ENCODE measurements at regions of chr5 and their contacts with region 1.

Region 1: DNA sequence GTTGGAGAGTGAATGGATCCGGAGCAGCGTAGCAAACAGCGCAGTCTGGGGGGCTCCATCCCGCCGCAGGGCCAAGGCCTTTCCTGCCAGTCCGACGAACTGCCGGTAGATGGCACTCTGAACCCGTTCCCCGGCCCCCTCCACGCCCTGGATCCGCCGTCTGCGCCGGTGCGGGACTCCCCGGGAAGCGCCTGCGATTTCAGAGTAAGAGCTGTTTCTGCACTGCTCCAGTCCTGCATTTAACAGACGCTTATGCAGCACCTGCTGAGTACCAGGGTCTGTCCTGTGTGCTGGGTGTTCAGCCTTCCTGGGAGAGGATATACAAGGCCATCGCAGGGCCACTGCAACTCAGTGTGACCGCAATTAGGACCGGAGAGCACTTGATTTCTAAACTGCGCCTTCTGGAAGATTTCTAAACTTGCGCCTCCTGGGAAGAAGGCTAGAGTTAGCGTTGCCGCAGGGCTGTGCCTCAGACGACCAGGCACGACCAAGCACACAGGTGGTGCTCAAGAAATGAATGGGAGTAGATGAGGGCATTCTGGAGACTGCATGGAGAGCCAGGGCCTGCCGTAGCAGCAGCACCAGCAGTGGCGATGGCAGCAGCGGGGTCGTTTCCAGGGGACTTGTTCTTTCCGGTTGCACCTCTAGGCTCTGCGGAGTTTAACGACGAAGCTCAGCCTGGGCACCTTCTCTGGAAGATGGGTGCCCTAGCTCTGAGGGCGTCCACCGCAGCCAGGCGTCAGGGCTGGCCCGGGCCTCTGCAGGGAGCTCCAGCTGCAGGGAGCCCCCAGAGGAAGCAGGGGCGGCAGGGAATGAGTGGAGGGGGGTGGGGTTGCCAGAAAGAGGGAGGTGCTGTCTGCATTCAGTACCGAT is 14.3 kb upstream of the TIFAB start:
- DNase-seq: peak; percentile 81 to 89 (median 84)
- ATAC-seq: peak; percentile 94
- H3K4me3 ChIP-seq: no peak overlapping the region
- H3K27ac ChIP-seq: no peak overlapping the region
- H3K4me1 ChIP-seq: peaks cover 4 to 15% of the 10 kb centered on the region in 2 experiments; a peak in 4 of 5 replicates
- H3K27me3 ChIP-seq: peaks cover 0 to 12% of the 10 kb centered on the region in 2 experiments; a peak in 2 of 5 replicates
- CTCF ChIP-seq: peak; percentile 90 to 95 (median 95)
- EP300 ChIP-seq: no peak
- POLR2A ChIP-seq: no peak
- RAD21 ChIP-seq: peak; percentile 99

Region 2: GRCh38 chr5:135551593-135552447 is 85.4 kb after region 1 on chr5:
- CTCF ChIA-PET with region 1: interaction called, 51 read pairs
- POLR2A ChIA-PET with region 1: interaction called, 28 read pairs
- in situ Hi-C with region 1: loop called (anchors 5 kb)
- intact Hi-C with region 1: loop called (anchors 1 kb)
- DNase-seq: peak; percentile 77 to 80 (median 80)
- ATAC-seq: peak; percentile 93
- H3K4me3 ChIP-seq: no peak overlapping the region
- H3K27ac ChIP-seq: no peak overlapping the region
- H3K4me1 ChIP-seq: peaks cover 3% of the 10 kb centered on the region in 2 experiments; a peak in 2 of 5 replicates
- H3K27me3 ChIP-seq: peaks cover 0 to 16% of the 10 kb centered on the region in 2 experiments; a peak in 3 of 5 replicates
- CTCF ChIP-seq: peak; percentile 90 to 93 (median 93)
- EP300 ChIP-seq: no peak
- POLR2A ChIP-seq: no peak
- RAD21 ChIP-seq: peak; percentile 96 to 98

Region 3: GRCh38 chr5:135565725-135566421 is 99.5 kb after region 1 on chr5:
- CTCF ChIA-PET with region 1: interaction called, 12 read pairs
- POLR2A ChIA-PET with region 1: interaction called, 9 read pairs
- in situ Hi-C with region 1: no loop called
- intact Hi-C with region 1: no loop called
- DNase-seq: peak; percentile 78 to 82 (median 80)
- ATAC-seq: peak; percentile 92
- H3K4me3 ChIP-seq: no peak overlapping the region
- H3K27ac ChIP-seq: no peak overlapping the region
- H3K4me1 ChIP-seq: peaks cover 7 to 10% of the 10 kb centered on the region in 2 experiments
- H3K27me3 ChIP-seq: peaks cover 0 to 4% of the 10 kb centered on the region in 2 experiments; a peak in 2 of 5 replicates
- CTCF ChIP-seq: peak; percentile 91 to 95 (median 92)
- EP300 ChIP-seq: no peak
- POLR2A ChIP-seq: no peak
- RAD21 ChIP-seq: peak; percentile 53 to 66

Region 4: DNA sequence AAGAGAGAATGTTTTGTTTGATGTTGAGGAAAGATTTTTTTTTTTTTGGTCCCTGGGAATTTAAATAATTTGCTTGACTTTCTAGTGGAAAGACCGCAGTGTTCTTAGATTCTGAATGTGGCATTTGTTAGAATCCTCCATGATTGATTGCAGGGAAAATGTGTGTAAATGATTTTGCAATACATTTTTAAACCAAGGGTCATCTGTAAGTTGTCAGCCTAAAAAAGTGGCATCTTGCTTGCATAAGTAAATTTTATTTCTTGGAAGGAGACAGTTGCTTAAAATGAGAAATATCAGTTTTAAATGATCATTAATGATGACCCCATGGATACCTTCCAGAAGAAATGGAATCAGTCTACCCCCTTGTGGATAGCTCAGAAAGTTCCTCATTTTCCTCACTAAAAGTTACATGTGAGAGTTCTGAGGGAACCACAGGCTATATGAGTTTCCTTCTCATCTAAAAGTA is 262.9 kb after region 1 on chr5:
- CTCF ChIA-PET with region 1: no interaction called
- POLR2A ChIA-PET with region 1: no interaction called
- in situ Hi-C with region 1: loop called (anchors 10 kb)
- intact Hi-C with region 1: no loop called
- DNase-seq: no peak
- ATAC-seq: no peak
- H3K4me3 ChIP-seq: no peak overlapping the region
- H3K27ac ChIP-seq: no peak overlapping the region
- H3K4me1 ChIP-seq: no peaks in the 10 kb centered on the region
- H3K27me3 ChIP-seq: peaks cover 0 to 4% of the 10 kb centered on the region in 2 experiments; a peak in 1 of 5 replicates
- CTCF ChIP-seq: peak in 2 of 3 experiments; percentile 15 to 48; a peak in 2 of 6 replicates
- EP300 ChIP-seq: no peak
- POLR2A ChIP-seq: no peak
- RAD21 ChIP-seq: peak in 1 of 2 experiments; percentile 64; a peak in 2 of 4 replicates

Region 5: DNA sequence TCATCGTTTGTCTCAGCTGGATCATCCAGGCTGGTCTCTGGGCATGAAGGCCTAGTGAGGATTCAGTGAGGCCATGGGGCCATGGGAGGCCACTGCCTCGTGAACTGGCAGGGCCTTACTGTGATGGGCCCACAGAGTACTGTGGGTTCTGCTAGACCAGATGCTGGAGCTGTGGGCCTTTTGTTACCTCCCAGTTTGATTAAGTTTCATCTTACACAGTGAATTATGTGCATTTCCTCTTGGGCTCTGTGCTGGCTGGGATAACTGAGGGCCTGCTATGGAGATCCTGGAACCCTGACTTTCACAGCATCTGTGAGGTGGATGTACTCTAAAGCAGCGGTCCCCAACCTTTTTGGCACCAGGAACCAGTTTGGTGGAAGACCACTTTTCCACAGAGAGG is 348.4 kb after region 1 on chr5:
- CTCF ChIA-PET with region 1: no interaction called
- POLR2A ChIA-PET with region 1: no interaction called
- in situ Hi-C with region 1: loop called (anchors 5 kb)
- intact Hi-C with region 1: no loop called
- DNase-seq: no peak
- ATAC-seq: no peak
- H3K4me3 ChIP-seq: no peak overlapping the region
- H3K27ac ChIP-seq: no peak overlapping the region
- H3K4me1 ChIP-seq: no peaks in the 10 kb centered on the region
- H3K27me3 ChIP-seq: peaks cover 4 to 24% of the 10 kb centered on the region in 2 experiments; a peak in 3 of 5 replicates
- CTCF ChIP-seq: no peak
- EP300 ChIP-seq: no peak
- POLR2A ChIP-seq: no peak
- RAD21 ChIP-seq: no peak

Region 6: DNA sequence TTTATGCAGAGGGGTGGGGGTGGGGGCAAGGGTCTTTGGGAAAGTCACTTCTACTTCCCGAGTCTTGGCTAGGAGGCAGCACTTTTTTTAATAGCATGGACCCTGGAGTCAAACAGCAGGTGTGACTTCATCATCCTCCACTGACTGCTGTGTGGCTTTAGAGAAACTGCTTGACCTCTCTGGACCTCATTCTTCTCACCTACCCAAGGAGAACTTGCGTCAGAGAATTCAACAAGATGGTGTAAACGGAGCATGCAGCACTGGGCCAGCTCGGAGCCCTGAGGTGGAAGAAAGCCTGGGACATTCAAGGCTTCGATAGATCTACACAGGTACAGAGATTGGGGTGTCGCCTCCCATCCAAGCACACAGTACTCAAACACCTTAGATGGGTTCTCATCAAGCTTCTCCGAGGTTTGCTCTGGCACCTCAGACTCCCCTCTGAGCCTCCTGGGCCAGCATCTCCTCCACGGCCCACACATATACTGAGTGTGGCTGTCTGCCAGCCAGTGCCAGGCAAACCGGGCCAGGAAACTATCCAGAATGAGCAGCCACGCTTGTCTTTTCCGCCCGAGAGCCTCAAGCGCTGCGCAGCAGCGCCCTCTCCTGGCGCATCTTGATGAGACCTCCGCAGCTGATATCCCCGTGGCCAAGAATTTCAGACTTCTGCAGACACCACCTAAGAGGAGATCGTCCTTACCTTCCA is 363.4 kb after region 1 on chr5:
- CTCF ChIA-PET with region 1: interaction called, 4 read pairs
- POLR2A ChIA-PET with region 1: interaction called, 4 read pairs
- in situ Hi-C with region 1: no loop called
- intact Hi-C with region 1: loop called (anchors 5 kb)
- DNase-seq: peak; percentile 72 to 78 (median 75)
- ATAC-seq: peak; percentile 83
- H3K4me3 ChIP-seq: no peak overlapping the region
- H3K27ac ChIP-seq: no peak overlapping the region
- H3K4me1 ChIP-seq: peaks cover 0 to 5% of the 10 kb centered on the region in 2 experiments; a peak in 1 of 5 replicates
- H3K27me3 ChIP-seq: peaks cover 2 to 63% of the 10 kb centered on the region in 2 experiments; a peak in 3 of 5 replicates
- CTCF ChIP-seq: peak; percentile 85 to 92 (median 88)
- EP300 ChIP-seq: no peak
- POLR2A ChIP-seq: no peak
- RAD21 ChIP-seq: peak; percentile 77 to 82